ENCODE measurements at regions of chr1 and their contacts with region 1.

Region 1: DNA sequence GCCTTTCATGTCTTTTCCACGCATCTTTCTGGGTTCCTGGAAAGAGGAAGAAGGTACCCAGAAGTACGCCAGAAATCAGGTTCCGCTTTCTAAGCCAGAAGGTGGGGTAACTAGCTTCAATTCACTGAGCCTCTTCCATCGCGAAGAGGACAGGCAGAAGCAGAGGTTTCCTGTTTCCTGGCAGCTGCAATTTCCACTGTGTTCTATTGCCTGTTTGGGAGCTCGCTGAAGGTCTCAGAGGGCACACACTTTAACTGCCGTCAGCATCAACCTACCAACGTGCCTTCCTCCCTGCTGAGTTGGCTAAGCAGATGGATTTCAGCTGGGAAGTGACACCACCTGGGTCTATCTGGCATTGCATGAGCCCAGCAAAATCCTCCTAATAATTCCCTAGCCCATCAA is 10.0 kb downstream of the NCF2 start:
- DNase-seq: peak in 3 of 4 experiments; percentile 30 to 54 (median 48)
- ATAC-seq: peak; percentile 82
- H3K4me3 ChIP-seq: no peak overlapping the region
- H3K27ac ChIP-seq: no peak overlapping the region
- H3K4me1 ChIP-seq: peaks cover 3 to 9% of the 10 kb centered on the region in 2 experiments; a peak in 3 of 5 replicates
- H3K27me3 ChIP-seq: peaks cover 44 to 46% of the 10 kb centered on the region in 2 experiments
- CTCF ChIP-seq: peak; percentile 40 to 60 (median 46); a peak in 5 of 6 replicates
- EP300 ChIP-seq: no peak
- POLR2A ChIP-seq: no peak
- RAD21 ChIP-seq: peak in 1 of 2 experiments; percentile 52; a peak in 2 of 4 replicates

Region 2: GRCh38 chr1:183432548-183432875 is 147.8 kb before region 1 on chr1:
- CTCF ChIA-PET with region 1: no interaction called
- POLR2A ChIA-PET with region 1: no interaction called
- in situ Hi-C with region 1: no loop called
- intact Hi-C with region 1: no loop called
- DNase-seq: no peak
- ATAC-seq: no peak
- H3K4me3 ChIP-seq: no peak overlapping the region
- H3K27ac ChIP-seq: no peak overlapping the region
- H3K4me1 ChIP-seq: no peaks in the 10 kb centered on the region
- H3K27me3 ChIP-seq: peaks cover 8 to 16% of the 10 kb centered on the region in 2 experiments; a peak in 4 of 5 replicates
- CTCF ChIP-seq: no peak
- EP300 ChIP-seq: no peak
- POLR2A ChIP-seq: no peak
- RAD21 ChIP-seq: no peak

Region 3: GRCh38 chr1:183543619-183544204 is 36.6 kb before region 1 on chr1:
- CTCF ChIA-PET with region 1: no interaction called
- POLR2A ChIA-PET with region 1: no interaction called
- in situ Hi-C with region 1: no loop called
- intact Hi-C with region 1: no loop called
- DNase-seq: peak in 3 of 4 experiments; percentile 27 to 56 (median 46)
- ATAC-seq: peak; percentile 97
- H3K4me3 ChIP-seq: no peak overlapping the region
- H3K27ac ChIP-seq: no peak overlapping the region
- H3K4me1 ChIP-seq: no peaks in the 10 kb centered on the region
- H3K27me3 ChIP-seq: no peaks in the 10 kb centered on the region
- CTCF ChIP-seq: peak; percentile 66 to 74 (median 66)
- EP300 ChIP-seq: no peak
- POLR2A ChIP-seq: no peak
- RAD21 ChIP-seq: peak; percentile 65 to 74

Region 4: DNA sequence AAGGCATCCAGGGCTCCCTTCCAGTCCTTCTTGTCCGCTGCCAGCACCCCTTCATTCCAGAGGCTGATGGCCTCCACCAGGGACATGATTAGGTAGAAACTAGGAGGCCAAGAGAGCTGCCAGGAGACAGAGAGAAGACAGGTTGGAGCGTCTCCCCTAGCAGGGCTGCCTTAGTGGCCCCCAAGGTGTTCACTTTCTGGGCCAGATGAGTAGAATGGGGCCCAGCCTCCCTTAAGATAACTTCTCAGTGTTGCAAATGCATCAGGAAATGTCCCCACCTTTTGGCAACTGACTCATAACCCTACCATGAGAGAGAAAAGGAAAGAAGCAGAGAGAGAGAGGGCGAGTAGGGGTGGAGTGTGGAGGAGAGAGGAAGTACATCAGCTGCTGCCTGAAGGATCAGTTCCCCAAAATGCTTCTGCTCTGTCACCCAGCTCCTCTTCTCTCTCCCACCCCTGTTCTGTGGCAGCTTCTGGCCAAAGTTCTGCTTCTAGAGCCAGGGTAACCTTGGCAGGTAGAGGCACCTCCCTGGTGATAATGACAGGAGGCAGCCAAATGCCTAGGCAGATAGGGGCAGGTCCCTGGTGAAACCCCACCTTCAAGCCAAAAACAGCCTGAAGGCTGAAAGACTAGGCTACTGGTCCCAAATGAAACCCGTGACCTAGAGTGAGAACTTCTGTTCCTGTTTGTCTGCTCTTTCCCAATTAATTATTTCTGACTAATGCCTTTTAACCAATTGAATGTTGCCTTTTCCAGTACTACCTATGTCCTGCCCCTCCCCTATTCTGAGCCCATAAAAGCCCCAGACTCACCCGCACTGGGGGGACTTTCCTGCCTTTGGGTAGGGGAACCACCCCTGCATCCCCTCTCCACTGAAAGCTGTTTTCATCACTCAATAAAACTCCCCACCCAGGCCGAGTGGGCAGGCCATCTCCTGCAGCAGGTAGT is 10.2 kb after region 1 on chr1 and contains the start of gene NCF2:
- CTCF ChIA-PET with region 1: no interaction called
- POLR2A ChIA-PET with region 1: interaction called, 11 read pairs
- in situ Hi-C with region 1: no loop called
- intact Hi-C with region 1: no loop called
- DNase-seq: no peak
- ATAC-seq: peak; percentile 61
- H3K4me3 ChIP-seq: no peak within 1 kb of the TSS
- H3K27ac ChIP-seq: no peak within 1 kb of the TSS
- H3K4me1 ChIP-seq: no peaks in the 10 kb centered on the region
- H3K27me3 ChIP-seq: peaks cover 24 to 51% of the 10 kb centered on the region in 2 experiments
- CTCF ChIP-seq: peak in 1 of 3 experiments; percentile 15; a peak in 1 of 6 replicates
- EP300 ChIP-seq: no peak
- POLR2A ChIP-seq: no peak
- RAD21 ChIP-seq: no peak
- polyA plus RNA-seq, gene NCF2: 0.10 TPM in 1 of 2 experiments, not detected in the other